Mammary epithelial cell (primary cell): ENCODE measurements at regions of chr1 and their contacts with region 1.

Region 1: DNA sequence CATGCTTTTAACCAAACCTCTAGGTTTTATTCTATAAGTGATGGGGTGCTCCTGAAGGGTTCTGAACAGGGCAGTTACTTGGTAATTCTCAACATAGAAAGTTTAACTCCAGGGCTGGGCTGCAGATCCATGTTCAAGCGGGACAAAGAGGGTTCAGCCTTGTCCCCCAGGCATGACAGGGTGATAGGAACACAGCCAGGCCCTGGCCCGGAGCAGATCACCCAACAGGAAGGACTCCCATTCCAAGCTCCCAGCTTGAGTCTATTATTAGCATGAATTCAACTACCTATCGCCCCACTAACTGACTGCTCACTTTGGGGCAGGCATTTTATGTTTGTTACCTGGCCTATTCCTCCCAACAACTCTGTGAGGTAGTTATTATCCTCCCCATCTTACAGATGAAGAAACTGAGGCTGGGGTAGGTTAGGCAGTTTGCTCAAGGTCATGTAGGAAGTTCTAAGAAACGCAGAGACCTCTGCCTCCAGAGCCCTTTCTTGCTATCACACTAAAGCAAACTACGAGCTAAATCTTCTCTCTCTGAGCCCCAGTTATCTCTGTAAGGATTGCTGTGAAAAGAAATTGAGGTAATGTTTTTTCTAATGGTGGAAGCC is 14.5 kb downstream of the ASAP3 start:
- DNase-seq: no peak
- H3K4me3 ChIP-seq: no peak overlapping the region
- H3K27ac ChIP-seq: no peak overlapping the region
- H3K4me1 ChIP-seq: peaks cover 29% of the 10 kb centered on the region
- H3K27me3 ChIP-seq: no peaks in the 10 kb centered on the region
- CTCF ChIP-seq: no peak

Region 2: GRCh38 chr1:23452011-23452411 is 17.5 kb before region 1 on chr1:
- CTCF ChIA-PET with region 1: no interaction called
- dilution Hi-C with region 1: no loop called
- in situ Hi-C with region 1: no loop called
- intact Hi-C with region 1: loop called (anchors 2 kb)
- DNase-seq: peak; percentile 94
- H3K4me3 ChIP-seq: no peak overlapping the region
- H3K27ac ChIP-seq: no peak overlapping the region
- H3K4me1 ChIP-seq: peaks cover 31% of the 10 kb centered on the region
- H3K27me3 ChIP-seq: no peaks in the 10 kb centered on the region
- CTCF ChIP-seq: no peak

Region 3: DNA sequence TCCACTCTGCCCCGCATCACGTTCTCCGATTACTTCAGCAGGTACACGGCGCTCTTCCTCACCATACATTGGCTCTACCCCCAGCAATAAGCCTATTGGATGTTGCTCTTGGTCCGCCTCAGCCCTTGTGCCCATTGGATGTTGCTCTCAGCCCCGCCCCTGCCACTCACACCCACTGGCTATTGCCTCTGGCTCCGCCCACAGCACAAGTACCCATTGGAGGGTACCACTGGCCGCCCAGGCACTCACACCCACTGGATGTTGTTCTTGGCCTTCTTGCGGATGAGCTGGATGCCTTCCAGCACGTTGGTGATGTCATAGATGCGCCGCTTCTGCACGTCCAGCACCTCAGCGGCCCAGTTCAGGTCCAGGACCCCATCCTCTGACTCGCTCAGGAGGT is 52.1 kb after region 1 on chr1:
- CTCF ChIA-PET with region 1: no interaction called
- dilution Hi-C with region 1: no loop called
- in situ Hi-C with region 1: no loop called
- intact Hi-C with region 1: no loop called
- DNase-seq: no peak
- H3K4me3 ChIP-seq: no peak overlapping the region
- H3K27ac ChIP-seq: no peak overlapping the region
- H3K4me1 ChIP-seq: no peaks in the 10 kb centered on the region
- H3K27me3 ChIP-seq: no peaks in the 10 kb centered on the region
- CTCF ChIP-seq: no peak